ENCODE measurements at regions of chr3 and their contacts with region 1.

Region 1: DNA sequence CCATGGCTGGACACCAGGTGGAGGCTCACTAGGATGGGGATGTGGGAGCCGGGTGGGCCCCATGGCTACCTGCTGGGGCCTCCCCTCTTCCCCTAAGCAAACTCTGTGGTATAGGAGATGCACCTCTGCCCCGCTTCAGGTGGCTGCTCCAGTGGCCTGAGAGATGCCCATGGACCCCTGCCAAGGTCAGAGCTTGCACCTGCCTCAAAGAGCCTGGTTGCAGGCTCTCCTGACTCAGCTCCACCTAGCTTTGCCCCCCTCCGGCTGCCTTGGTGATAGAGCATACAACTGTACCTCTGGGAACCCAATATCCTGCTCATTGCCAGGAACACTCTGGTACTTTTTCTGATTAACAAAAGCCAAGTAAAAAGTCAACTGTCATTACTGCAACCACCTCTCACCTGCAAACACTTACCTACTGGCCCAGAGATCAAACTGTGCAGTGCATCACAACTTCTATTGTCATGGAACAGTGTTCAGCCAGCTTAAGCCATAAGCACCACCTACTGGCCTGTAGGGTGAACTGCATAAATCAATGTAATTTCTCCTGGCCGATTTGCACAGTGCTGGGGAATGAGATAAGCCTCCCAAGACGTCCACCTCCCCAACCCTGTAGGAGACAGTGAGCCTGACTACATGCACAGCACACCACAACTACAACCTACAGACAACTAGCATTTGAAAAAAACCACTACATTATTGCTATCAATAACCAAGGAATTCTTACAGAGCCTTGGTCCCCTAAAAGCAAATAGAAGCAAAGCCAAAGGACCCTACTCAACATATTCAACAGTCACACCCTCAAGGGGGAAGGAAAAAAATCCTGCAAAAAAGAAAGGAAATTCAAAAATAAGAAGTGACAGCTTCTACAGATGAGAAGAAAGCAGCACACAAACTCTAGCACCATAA is 352.4 kb upstream of the ARHGEF26 start:
- DNase-seq: peak in 2 of 3 donors; percentile 28 to 68
- ATAC-seq: peak; percentile 98
- H3K4me3 ChIP-seq: no peak overlapping the region
- H3K4me1 ChIP-seq: no peaks in the 10 kb centered on the region
- CTCF ChIP-seq: peak; percentile 63

Region 2: GRCh38 chr3:153026026-153026425 is 742.8 kb before region 1 on chr3:
- intact Hi-C with region 1: loop called in 1 of 2 experiments (anchors 5 kb)
- DNase-seq: no peak
- ATAC-seq: no peak
- H3K4me3 ChIP-seq: no peak overlapping the region
- H3K4me1 ChIP-seq: no peaks in the 10 kb centered on the region
- CTCF ChIP-seq: peak; percentile 23

Region 3: GRCh38 chr3:153043729-153044328 is 725.0 kb before region 1 on chr3:
- intact Hi-C with region 1: loop called in 1 of 2 experiments (anchors 10 kb)
- DNase-seq: no peak
- ATAC-seq: no peak
- H3K4me3 ChIP-seq: no peak overlapping the region
- H3K4me1 ChIP-seq: no peaks in the 10 kb centered on the region
- CTCF ChIP-seq: no peak

Region 4: DNA sequence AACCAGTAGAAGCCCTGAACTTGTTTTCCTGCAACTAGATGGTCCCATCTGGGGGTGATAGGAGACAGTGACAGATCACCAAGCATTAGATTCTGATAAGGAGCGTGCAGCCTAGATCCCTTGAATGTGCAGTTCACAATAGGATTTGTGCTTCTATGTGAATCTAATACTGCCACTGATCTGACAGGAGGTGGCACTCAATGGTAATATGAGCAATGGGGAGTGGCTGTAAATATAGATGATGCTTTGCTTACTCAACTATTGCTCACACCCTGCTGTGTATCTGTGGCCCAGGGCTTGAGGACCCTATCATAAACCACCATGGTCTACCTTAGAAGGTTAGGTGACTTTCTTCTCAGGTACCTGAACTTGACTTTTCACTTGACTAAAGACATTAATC is 64.7 kb before region 1 on chr3:
- intact Hi-C with region 1: loop called in 1 of 2 experiments (anchors 2 kb)
- DNase-seq: peak in 1 of 3 donors; percentile 20
- ATAC-seq: peak; percentile 36
- H3K4me3 ChIP-seq: no peak overlapping the region
- H3K4me1 ChIP-seq: no peaks in the 10 kb centered on the region
- CTCF ChIP-seq: no peak